ENCODE measurements at regions of chr12 and their contacts with region 1.

Region 1: GRCh38 chr12:74801625-74802024 is 264.0 kb downstream of the ATXN7L3B start:
- DNase-seq: no peak
- ATAC-seq: no peak
- H3K4me3 ChIP-seq: no peak overlapping the region
- H3K27ac ChIP-seq: no peak overlapping the region
- H3K4me1 ChIP-seq: no peaks in the 10 kb centered on the region
- H3K27me3 ChIP-seq: no peaks in the 10 kb centered on the region
- CTCF ChIP-seq: no peak
- EP300 ChIP-seq: no peak
- POLR2A ChIP-seq: no peak
- RAD21 ChIP-seq: no peak

Region 2: GRCh38 chr12:73935817-73936216 is 865.8 kb before region 1 on chr12:
- CTCF ChIA-PET with region 1: no interaction called
- POLR2A ChIA-PET with region 1: no interaction called
- RAD21 ChIA-PET with region 1: no interaction called
- SMC1A ChIA-PET with region 1: no interaction called
- in situ Hi-C with region 1: no loop called
- intact Hi-C with region 1: no loop called
- DNase-seq: no peak
- ATAC-seq: peak; percentile 19; the same call in 1 of the 3 replicates
- H3K4me3 ChIP-seq: no peak overlapping the region
- H3K27ac ChIP-seq: no peak overlapping the region
- H3K4me1 ChIP-seq: no peaks in the 10 kb centered on the region
- H3K27me3 ChIP-seq: no peaks in the 10 kb centered on the region
- CTCF ChIP-seq: no peak; a peak in 1 of 6 replicates
- EP300 ChIP-seq: no peak
- POLR2A ChIP-seq: no peak
- RAD21 ChIP-seq: peak; percentile 41; the same call in 1 of the 2 replicates

Region 3: DNA sequence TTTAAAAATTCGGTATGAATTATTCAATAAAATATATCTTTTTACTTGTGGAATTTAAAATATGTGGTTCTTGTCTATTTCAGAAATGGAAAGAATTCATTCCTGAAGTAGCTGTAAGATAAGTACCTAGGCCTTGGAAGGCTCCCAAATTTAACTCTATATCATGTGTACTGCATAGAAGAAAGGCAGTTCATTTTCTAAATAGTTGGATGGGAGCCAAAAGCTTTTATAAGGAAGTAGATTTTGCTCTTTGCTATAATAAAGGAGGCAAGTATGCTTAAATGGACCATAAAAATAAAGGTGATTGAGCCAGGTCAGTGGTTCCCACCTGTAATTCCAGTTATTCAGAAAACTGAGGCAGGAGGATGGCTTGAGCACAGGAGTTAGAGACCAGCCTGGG is 76.5 kb before region 1 on chr12:
- CTCF ChIA-PET with region 1: no interaction called
- POLR2A ChIA-PET with region 1: no interaction called
- RAD21 ChIA-PET with region 1: no interaction called
- SMC1A ChIA-PET with region 1: no interaction called
- in situ Hi-C with region 1: no loop called
- intact Hi-C with region 1: no loop called
- DNase-seq: no peak
- ATAC-seq: no peak
- H3K4me3 ChIP-seq: no peak overlapping the region
- H3K27ac ChIP-seq: no peak overlapping the region
- H3K4me1 ChIP-seq: no peaks in the 10 kb centered on the region
- H3K27me3 ChIP-seq: no peaks in the 10 kb centered on the region
- CTCF ChIP-seq: no peak
- EP300 ChIP-seq: no peak
- POLR2A ChIP-seq: no peak
- RAD21 ChIP-seq: no peak

Region 4: DNA sequence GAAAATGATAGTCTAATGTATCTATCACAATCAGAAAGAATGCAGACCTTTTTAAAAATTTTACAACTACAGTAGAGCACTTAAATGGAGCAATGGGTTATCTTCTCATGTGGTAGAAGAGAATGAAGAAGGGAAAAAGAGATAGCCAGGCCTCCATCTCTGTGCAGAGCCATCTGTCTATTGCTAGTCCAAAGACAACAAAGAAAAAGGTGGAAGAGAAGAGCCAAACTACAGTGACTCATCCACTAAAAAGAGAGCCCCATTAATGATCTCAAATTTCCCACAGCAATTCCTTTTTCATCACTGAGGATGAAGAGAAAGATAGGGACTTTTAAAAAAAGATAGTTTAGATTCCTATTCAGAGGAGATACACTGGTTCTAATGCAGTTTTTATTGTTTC is 31.1 kb before region 1 on chr12:
- CTCF ChIA-PET with region 1: no interaction called
- POLR2A ChIA-PET with region 1: no interaction called
- RAD21 ChIA-PET with region 1: no interaction called
- SMC1A ChIA-PET with region 1: no interaction called
- in situ Hi-C with region 1: no loop called
- intact Hi-C with region 1: loop called (anchors 2 kb)
- DNase-seq: no peak
- ATAC-seq: no peak
- H3K4me3 ChIP-seq: no peak overlapping the region
- H3K27ac ChIP-seq: no peak overlapping the region
- H3K4me1 ChIP-seq: no peaks in the 10 kb centered on the region
- H3K27me3 ChIP-seq: no peaks in the 10 kb centered on the region
- CTCF ChIP-seq: no peak
- EP300 ChIP-seq: no peak
- POLR2A ChIP-seq: no peak
- RAD21 ChIP-seq: no peak

Region 5: DNA sequence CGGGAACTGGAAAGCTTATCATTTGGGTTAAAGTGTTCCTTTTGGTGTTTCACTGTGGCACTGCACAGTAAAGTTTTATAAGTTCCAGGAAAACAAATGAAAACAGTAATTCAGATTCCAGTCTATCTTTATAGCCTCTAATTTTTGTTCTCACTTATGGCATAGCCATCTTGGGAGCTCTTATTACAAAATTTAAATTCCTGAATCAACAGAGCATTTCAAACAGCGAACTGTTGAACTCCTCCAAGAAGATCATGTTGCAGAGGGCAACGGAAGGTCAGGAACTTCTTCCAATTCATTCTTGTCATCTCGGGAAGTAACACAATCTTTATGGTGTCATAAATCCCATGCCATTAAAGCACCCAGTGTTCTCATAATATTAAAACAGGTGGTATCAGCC is 178.9 kb after region 1 on chr12:
- CTCF ChIA-PET with region 1: no interaction called
- POLR2A ChIA-PET with region 1: no interaction called
- RAD21 ChIA-PET with region 1: no interaction called
- SMC1A ChIA-PET with region 1: no interaction called
- in situ Hi-C with region 1: no loop called
- intact Hi-C with region 1: no loop called
- DNase-seq: no peak
- ATAC-seq: no peak
- H3K4me3 ChIP-seq: no peak overlapping the region
- H3K27ac ChIP-seq: no peak overlapping the region
- H3K4me1 ChIP-seq: no peaks in the 10 kb centered on the region
- H3K27me3 ChIP-seq: no peaks in the 10 kb centered on the region
- CTCF ChIP-seq: no peak
- EP300 ChIP-seq: no peak
- POLR2A ChIP-seq: no peak
- RAD21 ChIP-seq: no peak

Region 6: DNA sequence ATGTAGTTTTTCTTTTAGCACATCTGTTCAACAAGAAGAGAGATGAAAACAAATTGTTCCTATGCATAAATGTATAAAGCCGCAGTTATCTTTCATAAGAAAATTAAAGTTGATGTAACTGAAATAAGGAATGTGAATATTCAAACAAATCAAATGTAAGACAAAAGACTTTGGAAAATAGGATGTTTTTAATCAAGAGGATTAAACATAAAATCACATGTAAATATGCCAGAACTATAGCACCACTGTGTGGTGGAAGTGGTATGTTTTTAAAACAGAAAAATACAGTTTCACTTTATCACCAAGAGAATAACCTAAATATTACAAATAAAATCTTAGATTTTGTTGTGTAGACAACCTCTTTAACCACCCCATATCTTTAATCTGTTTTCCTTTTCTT is 488.1 kb after region 1 on chr12:
- CTCF ChIA-PET with region 1: no interaction called
- POLR2A ChIA-PET with region 1: no interaction called
- RAD21 ChIA-PET with region 1: no interaction called
- SMC1A ChIA-PET with region 1: interaction called, 3 read pairs
- in situ Hi-C with region 1: no loop called
- intact Hi-C with region 1: loop called (anchors 10 kb)
- DNase-seq: no peak
- ATAC-seq: no peak
- H3K4me3 ChIP-seq: no peak overlapping the region
- H3K27ac ChIP-seq: no peak overlapping the region
- H3K4me1 ChIP-seq: no peaks in the 10 kb centered on the region
- H3K27me3 ChIP-seq: no peaks in the 10 kb centered on the region
- CTCF ChIP-seq: no peak; a peak in 1 of 6 replicates
- EP300 ChIP-seq: no peak
- POLR2A ChIP-seq: no peak
- RAD21 ChIP-seq: peak; percentile 46; the same call in 1 of the 2 replicates